Pancreas (tissue), 10 donors: ENCODE measurements at regions of chr17 and their contacts with region 1.

Region 1: DNA sequence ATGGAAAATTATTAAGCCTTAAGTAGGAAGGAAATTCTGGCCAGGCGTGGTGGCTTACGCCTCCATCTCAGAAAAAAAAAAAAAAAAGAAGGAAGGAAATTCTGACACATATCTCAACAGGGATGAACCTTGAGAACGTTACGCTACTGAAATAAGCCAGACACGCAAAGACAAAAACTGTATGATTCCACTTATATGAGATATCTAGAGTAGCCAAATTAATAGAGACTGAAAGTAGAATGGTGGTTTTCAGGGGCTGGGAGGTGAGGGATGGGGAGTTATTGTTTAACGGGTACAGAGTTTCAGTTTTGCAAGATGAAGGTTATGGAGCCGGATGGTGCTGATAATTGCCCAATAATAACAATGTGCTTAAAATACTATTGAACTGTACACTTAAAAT is 16.2 kb upstream of the HNF1B start:
- DNase-seq: no peak
- ATAC-seq: no peak
- H3K4me3 ChIP-seq: no peak overlapping the region
- H3K27ac ChIP-seq: no peak overlapping the region
- H3K4me1 ChIP-seq: peaks cover 0 to 4% (median 0%) of the 10 kb centered on the region in 3 donors
- H3K27me3 ChIP-seq: no peaks in the 10 kb centered on the region
- CTCF ChIP-seq: no peak

Region 2: GRCh38 chr17:37701496-37701898 is 59.6 kb before region 1 on chr17:
- intact Hi-C with region 1: loop called in 2 of 3 experiments (anchors 5 to 10 kb)
- DNase-seq: peak in 5 of 6 donors; percentile 43 to 74 (median 57)
- ATAC-seq: peak; percentile 66 to 84 (median 82)
- H3K4me3 ChIP-seq: no peak overlapping the region
- H3K27ac ChIP-seq: peak overlapping the region in 1 of 4 donors; percentile 25
- H3K4me1 ChIP-seq: peaks cover 0 to 8% (median 6%) of the 10 kb centered on the region in 3 donors
- H3K27me3 ChIP-seq: no peaks in the 10 kb centered on the region
- CTCF ChIP-seq: peak; percentile 48 to 75 (median 64)